Posterior vena cava (tissue), 2 donors: ENCODE measurements at regions of chr3 and their contacts with region 1.

Region 1: GRCh38 chr3:86748015-86748414 is 242.9 kb downstream of the VGLL3 start:
- DNase-seq: peak; percentile 70

Region 2: DNA sequence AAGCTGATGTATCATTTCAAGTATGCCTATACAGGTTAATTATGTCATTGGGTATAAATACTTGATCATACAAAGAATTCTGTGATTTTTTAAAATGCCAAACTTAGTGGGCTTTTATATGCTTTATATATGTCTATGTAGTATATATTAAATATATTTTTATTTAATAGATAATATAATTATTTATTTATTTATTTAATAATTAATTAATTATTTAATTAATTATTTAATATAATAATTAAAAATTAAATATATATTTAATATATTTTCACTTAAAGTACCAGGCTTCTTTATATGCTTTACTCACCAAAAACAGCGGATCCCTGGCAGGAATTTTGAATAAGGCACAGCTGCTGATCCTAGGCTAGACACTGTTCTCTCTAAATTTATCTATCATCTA is 444.1 kb before region 1 on chr3:
- intact Hi-C with region 1: no loop called
- DNase-seq: no peak

Region 3: DNA sequence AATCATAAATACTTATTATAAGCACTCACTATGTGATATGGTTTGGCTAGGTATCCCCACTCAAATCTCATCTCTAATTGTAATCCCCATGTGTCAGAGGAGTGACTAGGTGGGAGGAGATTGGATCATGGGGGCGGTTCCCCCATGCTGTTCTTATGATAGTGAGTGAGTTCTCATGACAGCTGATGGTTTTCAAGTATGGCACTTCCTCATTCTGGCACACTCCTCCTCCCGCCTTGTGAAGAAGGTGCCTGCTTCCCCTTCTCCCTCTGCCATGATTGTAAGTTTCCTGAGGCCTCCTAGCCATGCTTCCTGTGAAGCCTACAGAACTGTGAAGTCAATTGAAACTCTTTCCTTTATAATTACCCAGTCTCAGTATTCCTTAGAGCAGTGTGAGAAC is 425.8 kb after region 1 on chr3:
- intact Hi-C with region 1: loop called in 1 of 2 experiments (anchors 10 kb)
- DNase-seq: no peak